Activated T-helper 1 cell treated with anti-CD3 and anti-CD28 coated beads, Interleukin-12 subunit alpha, Interleukin-12 subunit beta, Interleukin-2, Interleukin-4 antibody, amounts not matched to agents 30 ng/mL and 10 ng/mL and 1 ng/mL, durations not matched to agents 14 hours and 24 hours and 36 hours (primary cell): ENCODE measurements at regions of chr1 and their contacts with region 1.

Region 1: DNA sequence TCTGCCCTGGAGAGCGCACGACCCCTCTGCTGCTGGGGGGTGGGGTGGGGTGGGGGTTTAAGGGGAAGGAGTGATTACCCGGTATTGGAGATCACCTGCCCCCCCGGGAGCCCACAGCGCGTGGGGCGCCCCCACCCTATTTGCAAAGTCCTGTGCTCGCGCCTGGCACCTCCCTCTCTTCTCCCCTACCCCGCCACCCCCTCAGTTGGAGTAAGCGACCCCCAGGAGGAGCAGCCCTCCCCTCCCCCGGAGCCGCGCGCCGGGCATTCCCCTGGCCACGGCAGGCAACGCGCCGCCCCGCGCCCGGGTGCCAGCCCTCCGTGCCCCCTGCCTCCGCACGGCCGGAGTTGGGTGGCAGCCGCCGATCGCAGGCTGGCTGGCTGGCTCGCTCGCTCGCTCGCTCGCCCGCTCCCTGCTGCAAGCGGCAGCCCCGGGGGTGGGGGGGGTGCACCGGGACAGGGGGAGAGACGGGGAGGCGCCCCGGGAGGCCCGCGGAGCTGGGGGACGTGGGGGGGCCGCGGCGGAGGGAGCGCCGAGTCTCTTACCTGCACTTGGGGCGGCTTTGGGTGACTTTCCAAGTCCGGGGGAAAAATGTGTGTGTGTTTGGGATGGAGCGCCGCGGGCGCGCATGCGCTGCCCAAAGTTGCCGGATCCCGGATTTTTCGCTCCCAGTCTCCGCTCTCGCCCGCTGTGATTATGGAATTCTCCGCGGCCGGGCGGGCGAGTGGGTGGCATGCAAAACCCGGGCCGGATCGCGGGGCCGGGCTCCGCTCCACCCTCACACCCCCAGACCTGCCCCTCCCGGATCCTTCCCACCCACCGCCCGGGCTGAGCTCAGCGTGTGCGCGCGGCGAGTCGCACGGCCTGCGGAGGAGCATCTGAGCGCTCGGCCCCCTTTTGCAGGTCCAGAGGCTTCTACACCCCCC is at the start of gene CASZ1:
- DNase-seq: no peak
- H3K4me3 Mint-ChIP-seq: no peak within 1 kb of the TSS
- H3K27ac Mint-ChIP-seq: no peak within 1 kb of the TSS
- H3K4me1 Mint-ChIP-seq: peaks cover 5% of the 10 kb centered on the region
- H3K27me3 Mint-ChIP-seq: peaks cover 60% of the 10 kb centered on the region
- total RNA-seq, gene CASZ1: 8.0 and 11.7 TPM in 2 replicates

Region 2: DNA sequence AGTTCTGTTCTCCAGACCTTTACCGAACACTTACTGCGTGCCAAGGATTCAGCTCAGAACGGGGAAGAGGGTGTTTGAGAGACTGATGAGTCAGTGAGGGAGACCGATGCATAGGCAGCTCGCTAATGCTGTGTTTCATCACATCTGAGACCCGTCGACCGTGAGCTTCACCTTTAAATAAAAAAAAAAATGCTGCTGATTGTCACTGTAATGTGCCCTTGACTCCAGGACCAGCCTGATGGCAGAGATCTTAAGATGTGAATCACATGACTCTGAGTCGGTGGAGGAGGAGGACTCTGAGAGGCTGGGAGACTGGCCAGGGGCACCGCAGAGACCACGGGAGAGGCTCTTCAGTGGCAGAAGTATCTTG is 1474.8 kb before region 1 on chr1:
- intact Hi-C with region 1: no loop called
- DNase-seq: no peak
- H3K4me3 Mint-ChIP-seq: no peak overlapping the region
- H3K27ac Mint-ChIP-seq: peak overlapping the region; percentile 13
- H3K4me1 Mint-ChIP-seq: peaks cover 38% of the 10 kb centered on the region
- H3K27me3 Mint-ChIP-seq: no peaks in the 10 kb centered on the region

Region 3: DNA sequence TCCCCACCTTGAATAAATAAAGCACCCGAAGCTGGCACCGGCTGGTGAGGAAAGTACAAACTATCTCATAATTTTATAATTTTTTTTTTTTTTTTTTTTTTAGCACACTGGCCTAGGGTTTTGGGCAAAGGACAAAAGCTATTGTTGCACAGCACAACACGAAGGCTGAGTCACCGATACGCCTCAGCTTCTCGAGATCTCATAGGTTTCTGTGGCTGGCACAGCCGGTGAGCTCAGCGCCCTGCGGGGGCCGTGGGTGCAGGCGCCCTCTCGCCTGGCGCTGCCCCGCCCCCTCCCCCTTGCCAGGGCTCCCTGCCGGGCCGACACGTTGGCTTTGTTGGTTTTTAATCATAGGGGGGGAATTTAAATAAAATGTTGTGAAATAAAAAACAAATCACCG is 17.1 kb before region 1 on chr1:
- intact Hi-C with region 1: no loop called
- DNase-seq: no peak
- H3K4me3 Mint-ChIP-seq: no peak overlapping the region
- H3K27ac Mint-ChIP-seq: no peak overlapping the region
- H3K4me1 Mint-ChIP-seq: no peaks in the 10 kb centered on the region
- H3K27me3 Mint-ChIP-seq: no peaks in the 10 kb centered on the region

Region 4: GRCh38 chr1:10867138-10867721 is 70.9 kb after region 1 on chr1:
- intact Hi-C with region 1: loop called (anchors 5 kb)
- DNase-seq: peak; percentile 48
- H3K4me3 Mint-ChIP-seq: peak overlapping the region; percentile 35
- H3K27ac Mint-ChIP-seq: no peak overlapping the region
- H3K4me1 Mint-ChIP-seq: peaks cover 5% of the 10 kb centered on the region
- H3K27me3 Mint-ChIP-seq: peaks cover 67% of the 10 kb centered on the region

Region 5: DNA sequence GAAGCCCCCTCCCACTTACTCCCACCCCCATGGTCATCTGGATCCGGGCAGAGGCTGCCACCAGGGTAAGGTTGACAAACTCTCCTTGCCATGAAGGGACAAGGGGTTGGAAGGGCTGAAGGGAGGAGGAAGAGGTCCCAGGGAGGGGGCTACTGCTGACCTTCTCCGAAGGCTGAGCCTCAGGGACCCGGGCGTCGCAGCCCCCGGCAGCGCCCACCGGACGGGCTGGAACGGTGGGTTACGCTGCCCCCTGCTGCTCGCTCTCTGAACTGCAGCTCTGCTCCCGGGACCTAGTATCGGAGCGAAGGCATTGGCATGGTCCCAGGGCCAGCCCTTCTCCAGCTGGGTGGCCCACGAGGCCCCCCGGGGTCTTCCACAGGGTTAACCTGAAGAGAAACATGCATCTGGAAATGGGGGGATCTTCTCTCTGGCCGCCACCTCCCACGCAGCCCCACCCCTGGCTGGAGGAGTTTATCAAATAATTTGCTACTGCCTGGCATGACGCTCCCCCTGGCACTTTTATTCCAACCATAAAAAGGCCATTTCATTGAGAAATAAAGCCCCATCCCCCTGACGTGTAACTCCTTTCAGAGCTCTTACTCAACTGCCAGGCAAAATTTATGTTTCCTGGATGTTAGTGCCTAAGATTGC is 145.7 kb after region 1 on chr1:
- intact Hi-C with region 1: loop called (anchors 5 kb)
- DNase-seq: peak; percentile 42
- H3K4me3 Mint-ChIP-seq: no peak overlapping the region
- H3K27ac Mint-ChIP-seq: no peak overlapping the region
- H3K4me1 Mint-ChIP-seq: peaks cover 31% of the 10 kb centered on the region
- H3K27me3 Mint-ChIP-seq: peaks cover 56% of the 10 kb centered on the region

Region 6: GRCh38 chr1:11693024-11693590 is 896.8 kb after region 1 on chr1:
- intact Hi-C with region 1: loop called (anchors 5 kb)
- DNase-seq: no peak
- H3K4me3 Mint-ChIP-seq: peak overlapping the region; percentile 11
- H3K27ac Mint-ChIP-seq: peak overlapping the region; percentile 14
- H3K4me1 Mint-ChIP-seq: peaks cover 21% of the 10 kb centered on the region
- H3K27me3 Mint-ChIP-seq: peaks cover 51% of the 10 kb centered on the region